Activated T-helper 1 cell treated with anti-CD3 and anti-CD28 coated beads, Interleukin-12 subunit alpha, Interleukin-12 subunit beta, Interleukin-2, Interleukin-4 antibody, amounts not matched to agents 30 ng/mL and 10 ng/mL and 1 ng/mL, durations not matched to agents 14 hours and 24 hours and 36 hours (primary cell): ENCODE measurements at regions of chr11 and their contacts with region 1.

Region 1: GRCh38 chr11:14974515-14975251 is 2.5 kb upstream of the CALCA start:
- DNase-seq: peak; percentile 41
- H3K4me3 Mint-ChIP-seq: peak overlapping the region; percentile 53
- H3K27ac Mint-ChIP-seq: no peak overlapping the region
- H3K4me1 Mint-ChIP-seq: peaks cover 33% of the 10 kb centered on the region
- H3K27me3 Mint-ChIP-seq: peaks cover 81% of the 10 kb centered on the region

Region 2: DNA sequence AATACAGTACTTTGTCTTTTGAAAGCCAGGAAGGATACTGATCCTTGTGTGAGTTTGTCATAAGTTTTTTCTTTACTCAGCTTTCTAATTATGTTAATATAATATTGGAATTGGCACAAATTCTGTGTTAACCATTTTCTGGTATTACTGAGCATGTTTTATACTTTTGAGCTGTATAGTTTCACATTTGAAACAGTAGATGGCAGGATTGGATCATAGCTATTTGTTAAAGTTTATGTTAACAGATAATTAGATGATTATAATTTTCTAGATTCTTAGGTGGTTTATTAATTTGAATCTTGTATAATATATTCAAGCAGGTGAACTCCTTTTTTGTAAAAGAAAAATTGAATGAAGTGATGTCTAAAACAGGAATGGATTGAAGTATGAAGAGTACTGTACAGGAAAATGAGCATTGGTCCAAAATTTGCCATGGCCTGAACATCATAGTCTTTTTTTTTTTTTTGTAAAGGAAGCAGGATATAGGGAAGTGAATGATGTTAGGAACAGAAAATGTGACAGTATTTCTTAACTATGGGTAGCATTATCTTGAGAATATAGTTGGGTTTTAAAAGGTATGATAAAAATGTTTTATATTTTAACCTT is 184.7 kb before region 1 on chr11:
- intact Hi-C with region 1: loop called (anchors 10 kb)
- DNase-seq: no peak
- H3K4me3 Mint-ChIP-seq: no peak overlapping the region
- H3K27ac Mint-ChIP-seq: peak overlapping the region; percentile 18
- H3K4me1 Mint-ChIP-seq: peaks cover 15% of the 10 kb centered on the region
- H3K27me3 Mint-ChIP-seq: no peaks in the 10 kb centered on the region

Region 3: GRCh38 chr11:14886513-14886912 is 88.2 kb before region 1 on chr11:
- intact Hi-C with region 1: no loop called
- DNase-seq: no peak
- H3K4me3 Mint-ChIP-seq: no peak overlapping the region
- H3K27ac Mint-ChIP-seq: no peak overlapping the region
- H3K4me1 Mint-ChIP-seq: peaks cover 46% of the 10 kb centered on the region
- H3K27me3 Mint-ChIP-seq: no peaks in the 10 kb centered on the region

Region 4: DNA sequence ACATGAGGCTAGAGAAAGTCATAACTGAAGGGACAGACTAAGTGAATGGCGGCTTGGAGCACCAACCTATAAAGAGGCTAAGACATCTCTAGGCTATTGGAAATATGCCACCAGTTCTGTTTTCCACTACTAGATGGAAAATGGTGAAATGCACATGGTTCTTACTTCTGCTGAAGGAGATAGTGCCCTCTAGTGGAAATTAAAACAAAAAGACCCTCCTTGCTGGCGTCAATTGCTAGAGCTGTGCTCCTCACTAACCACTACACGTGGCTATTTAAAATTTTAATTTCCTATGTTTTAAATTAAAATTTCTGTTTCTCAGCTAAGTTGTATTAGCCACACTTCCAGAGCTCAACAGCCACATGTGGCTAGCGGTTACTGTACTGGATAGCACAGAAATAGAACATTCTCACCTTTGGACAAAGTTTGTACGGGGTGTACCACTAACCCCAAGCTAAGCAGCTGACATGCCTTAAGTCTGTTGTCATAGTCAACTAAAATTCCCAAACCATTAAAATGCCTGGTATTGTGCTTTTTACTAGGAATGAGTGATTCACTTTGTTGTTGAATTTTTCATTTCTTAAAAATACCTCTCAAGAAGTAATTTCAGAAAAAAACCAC is 31.6 kb after region 1 on chr11:
- intact Hi-C with region 1: loop called (anchors 1 kb)
- DNase-seq: no peak
- H3K4me3 Mint-ChIP-seq: no peak overlapping the region
- H3K27ac Mint-ChIP-seq: no peak overlapping the region
- H3K4me1 Mint-ChIP-seq: no peaks in the 10 kb centered on the region
- H3K27me3 Mint-ChIP-seq: peaks cover 55% of the 10 kb centered on the region

Region 5: DNA sequence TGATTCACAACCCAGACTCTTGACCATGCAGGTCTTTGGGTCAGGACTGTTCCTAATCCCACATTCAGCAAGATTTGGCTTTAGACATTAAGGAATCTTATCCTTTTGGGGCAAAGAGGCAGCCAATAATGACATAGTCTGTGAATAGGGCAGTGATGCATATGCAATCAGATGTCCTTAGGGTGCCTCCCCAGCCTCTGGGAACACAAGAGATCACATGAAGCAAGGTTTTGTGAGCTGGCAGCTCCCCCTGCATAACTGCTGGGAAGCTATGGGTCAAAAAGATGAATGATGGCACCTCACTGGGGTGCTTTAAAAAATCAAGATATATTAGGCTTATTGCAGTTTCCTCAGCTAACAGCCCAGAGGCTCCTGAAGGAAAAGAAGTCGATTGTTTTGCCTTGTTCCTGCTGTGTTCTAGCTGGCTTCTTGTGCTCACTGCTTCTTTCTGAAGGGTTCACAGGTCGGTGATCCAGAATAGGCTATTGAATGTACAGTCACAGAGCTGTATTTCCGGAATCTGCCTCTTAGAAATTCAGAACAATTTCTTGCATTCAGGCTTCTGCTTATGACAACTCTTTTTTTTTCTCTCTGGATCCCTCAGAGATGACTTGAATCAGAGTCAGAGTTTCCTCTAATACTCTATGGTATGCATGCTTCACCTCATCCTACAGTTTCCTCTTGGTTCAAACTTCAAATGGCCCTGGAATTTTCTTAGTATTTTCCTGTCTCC is 171.8 kb after region 1 on chr11:
- intact Hi-C with region 1: no loop called
- DNase-seq: no peak
- H3K4me3 Mint-ChIP-seq: no peak overlapping the region
- H3K27ac Mint-ChIP-seq: no peak overlapping the region
- H3K4me1 Mint-ChIP-seq: peaks cover 20% of the 10 kb centered on the region
- H3K27me3 Mint-ChIP-seq: peaks cover 3% of the 10 kb centered on the region

Region 6: GRCh38 chr11:15208378-15209222 is 233.9 kb after region 1 on chr11:
- intact Hi-C with region 1: loop called (anchors 1 kb)
- DNase-seq: peak; percentile 65
- H3K4me3 Mint-ChIP-seq: no peak overlapping the region
- H3K27ac Mint-ChIP-seq: no peak overlapping the region
- H3K4me1 Mint-ChIP-seq: no peaks in the 10 kb centered on the region
- H3K27me3 Mint-ChIP-seq: peaks cover 8% of the 10 kb centered on the region

Region 7: DNA sequence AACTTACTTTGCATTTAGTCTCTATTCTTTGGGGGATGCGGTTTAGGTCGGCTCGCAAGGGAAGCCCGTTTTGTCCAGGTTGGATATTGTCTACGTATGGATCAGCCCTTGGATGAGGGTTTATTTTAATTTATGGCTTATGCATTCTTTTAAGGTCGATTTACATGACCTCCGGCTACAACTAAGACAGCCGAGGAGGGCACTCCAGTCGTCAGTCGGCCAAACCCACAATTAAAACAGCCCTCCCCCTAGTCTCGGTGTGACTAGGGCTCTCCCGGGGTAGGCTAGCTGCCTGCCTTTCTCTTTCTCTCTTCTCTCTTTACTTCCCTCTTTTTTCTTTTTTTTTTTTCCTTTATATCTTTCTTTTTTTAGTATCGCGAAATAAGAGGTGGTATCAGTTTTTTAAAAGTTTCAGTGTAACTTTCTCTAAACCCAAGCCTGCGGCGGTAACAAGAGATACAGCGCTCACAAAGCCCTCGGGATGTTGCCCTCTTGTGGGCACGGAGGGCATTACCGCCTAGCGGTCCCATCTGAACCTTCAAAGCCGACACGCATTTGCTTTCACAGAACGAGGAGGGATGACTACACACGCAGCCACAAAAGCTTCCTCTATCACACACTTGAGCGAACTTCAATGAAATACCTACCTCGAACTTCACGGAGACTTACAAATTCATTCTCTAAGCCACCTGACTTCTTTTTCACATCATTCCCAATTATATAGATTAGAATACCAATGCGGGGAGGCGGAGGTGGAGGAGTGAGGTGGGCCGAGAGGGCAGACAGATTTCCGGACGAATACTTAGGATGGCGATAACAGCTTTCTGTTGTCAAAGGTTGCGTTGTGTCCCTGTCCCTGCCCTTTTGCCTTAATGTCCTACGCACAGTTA is 1631.5 kb after region 1 on chr11:
- intact Hi-C with region 1: loop called (anchors 10 kb)
- DNase-seq: peak; percentile 74
- H3K4me3 Mint-ChIP-seq: peak overlapping the region; percentile 83
- H3K27ac Mint-ChIP-seq: peak overlapping the region; percentile 51
- H3K4me1 Mint-ChIP-seq: peaks cover 8% of the 10 kb centered on the region
- H3K27me3 Mint-ChIP-seq: peaks cover 47% of the 10 kb centered on the region